Right ventricle myocardium inferior (tissue), 1 donor: ENCODE measurements at regions of chr22 and their contacts with region 1.

Region 1: GRCh38 chr22:38181453-38182247 is at the start of gene PLA2G6:
- DNase-seq: peak; percentile 99
- ATAC-seq: peak; percentile 98
- total RNA-seq, gene PLA2G6: 11.4 TPM

Region 2: DNA sequence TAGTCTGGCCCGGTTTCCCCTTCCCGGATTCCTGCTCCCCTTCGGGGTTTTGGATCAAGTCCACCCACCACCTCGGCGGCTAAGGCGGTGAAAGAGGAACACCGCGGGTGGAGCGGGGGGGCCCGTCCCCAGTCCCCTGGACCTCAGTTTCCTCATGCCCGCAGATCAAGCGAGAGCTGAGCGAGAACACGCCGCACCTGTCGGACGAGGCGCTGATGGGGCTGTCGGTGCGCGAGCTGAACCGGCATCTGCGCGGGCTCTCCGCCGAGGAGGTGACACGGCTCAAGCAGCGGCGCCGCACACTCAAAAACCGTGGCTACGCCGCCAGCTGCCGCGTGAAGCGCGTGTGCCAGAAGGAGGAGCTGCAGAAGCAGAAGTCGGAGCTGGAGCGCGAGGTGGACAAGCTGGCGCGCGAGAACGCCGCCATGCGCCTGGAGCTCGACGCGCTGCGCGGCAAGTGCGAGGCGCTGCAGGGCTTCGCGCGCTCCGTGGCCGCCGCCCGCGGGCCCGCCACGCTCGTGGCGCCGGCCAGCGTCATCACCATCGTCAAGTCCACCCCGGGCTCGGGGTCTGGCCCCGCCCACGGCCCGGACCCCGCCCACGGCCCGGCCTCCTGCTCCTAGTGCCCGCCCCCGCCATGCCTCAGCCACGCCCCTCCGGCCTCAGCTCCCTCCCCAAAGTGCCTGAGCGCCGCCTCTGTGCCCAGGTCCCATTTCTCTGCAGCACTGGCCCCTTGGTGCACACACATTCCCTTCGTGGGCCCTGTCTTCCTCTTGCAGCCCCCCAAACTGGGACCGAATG is 32.8 kb after region 1 on chr22:
- intact Hi-C with region 1: no loop called
- DNase-seq: peak; percentile 81
- ATAC-seq: peak; percentile 54

Region 3: DNA sequence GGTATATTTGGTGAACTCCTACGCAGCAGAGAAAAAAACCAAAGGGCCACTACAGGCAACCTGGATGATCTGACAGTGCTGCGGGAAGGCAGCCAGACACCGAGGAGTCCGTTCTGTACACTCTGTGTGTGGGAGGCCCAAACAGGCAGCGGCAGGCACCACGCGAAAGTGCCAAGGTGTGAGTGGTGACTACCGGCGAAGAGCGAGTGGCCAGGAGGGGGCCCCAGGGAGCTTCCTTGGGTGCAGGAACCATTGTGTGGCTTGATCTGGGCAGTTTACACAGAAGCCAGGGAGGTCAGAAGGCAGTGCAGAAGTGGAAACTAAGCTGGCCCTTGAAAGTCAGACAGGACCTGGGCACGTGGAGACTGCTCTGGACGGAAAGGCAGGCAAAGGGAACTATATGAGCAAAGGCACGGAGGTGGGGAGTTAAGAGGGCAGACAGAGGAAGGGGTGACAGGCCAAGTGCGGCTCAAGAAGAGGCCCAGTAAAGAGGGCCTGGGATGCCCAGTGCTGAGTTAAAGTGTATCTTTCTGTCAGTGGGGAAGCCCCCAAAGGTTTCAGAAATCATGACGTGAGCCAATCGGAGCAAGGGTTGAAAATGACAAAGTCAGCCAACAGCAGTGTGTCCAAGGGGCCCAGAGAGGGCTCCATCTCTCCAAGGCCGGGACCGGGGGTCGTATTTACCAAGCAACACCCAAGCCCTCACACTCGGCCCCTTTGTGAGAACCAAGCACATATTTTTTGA is 80.6 kb after region 1 on chr22:
- intact Hi-C with region 1: no loop called
- DNase-seq: peak; percentile 75
- ATAC-seq: peak; percentile 45

Region 4: DNA sequence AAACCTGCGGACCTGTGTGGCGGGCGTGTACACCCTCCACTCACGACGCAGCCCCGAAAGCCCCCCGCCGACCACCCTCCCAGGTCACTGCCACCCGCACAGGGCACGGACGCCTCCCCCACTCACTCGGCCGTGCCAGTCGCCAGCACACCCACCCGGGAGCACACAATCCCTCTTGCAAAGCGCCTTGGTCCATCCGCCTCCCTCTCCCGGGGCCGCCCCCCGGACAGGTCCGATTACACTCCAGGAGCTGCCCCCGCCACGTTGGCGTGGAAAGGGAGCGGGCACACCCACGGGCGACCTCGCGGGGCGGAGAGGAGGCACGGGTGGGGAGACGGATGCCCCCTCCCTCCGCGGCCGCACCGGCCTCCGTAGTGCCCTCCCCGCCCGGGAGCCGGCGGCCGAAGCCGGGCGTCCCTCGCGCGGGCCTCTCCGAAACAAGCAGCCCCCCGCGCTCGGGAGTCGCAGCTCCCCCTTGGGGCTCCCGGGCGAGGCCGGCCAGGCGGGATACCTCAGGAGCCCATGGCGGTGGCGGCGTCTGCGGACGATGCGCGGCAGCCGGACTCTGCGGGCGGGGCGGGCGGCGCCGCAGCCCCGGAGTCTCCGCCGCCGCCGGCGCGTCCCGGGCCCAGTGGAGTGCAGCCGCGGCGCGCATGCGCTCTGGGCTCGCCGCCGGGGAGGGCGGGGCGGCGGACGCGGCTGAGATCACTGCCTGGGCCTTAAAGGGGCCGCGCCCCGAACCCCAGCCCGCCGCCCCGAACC is 90.9 kb after region 1 on chr22 and contains the start of gene TMEM184B:
- intact Hi-C with region 1: loop called (anchors 5 kb)
- DNase-seq: peak; percentile 93
- ATAC-seq: peak; percentile 95
- total RNA-seq, gene TMEM184B: 43.1 TPM